ENCODE measurements at regions of chr11 and their contacts with region 1.

Region 1: DNA sequence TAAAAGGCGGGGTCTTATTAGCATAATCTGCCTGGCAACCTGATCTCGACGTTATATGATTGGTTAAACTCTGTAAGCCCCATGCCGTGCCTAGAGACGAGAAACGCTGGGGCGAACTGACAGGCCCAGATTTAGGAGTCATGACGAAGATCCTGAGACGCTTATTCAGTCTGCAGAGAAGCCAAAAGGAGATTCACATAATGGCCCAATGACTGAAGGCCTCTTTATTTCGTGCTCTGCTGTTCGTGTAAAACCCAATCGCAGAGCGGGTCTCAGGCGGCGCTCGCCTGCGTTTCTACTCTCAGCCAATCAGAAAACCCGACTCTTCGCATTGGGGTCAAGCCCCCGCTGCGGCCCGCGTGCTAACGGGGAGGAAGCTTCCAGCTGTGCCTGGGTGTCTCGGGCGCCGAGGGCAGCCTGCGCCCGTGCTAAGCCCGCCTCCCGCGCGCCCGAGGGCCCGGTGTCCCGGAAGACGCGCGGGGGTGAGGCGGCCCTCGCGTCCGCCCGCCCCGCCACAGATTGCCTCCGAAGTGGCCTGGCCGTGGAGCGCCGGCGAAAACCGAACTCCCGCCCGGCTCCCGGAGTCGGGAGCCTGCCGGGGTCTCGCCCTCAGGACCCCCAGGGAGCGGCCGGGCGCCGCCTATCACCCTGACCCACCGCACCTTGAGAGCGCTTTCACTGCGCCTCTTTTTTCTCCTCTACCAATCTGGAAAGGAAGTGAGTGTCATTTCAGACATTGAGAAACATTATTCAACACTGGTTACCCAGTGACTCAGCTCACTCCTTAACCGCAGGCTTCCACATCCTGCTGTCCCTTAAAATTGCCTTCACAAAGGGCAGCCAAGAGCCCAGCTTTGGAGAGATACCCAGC is 446 bp upstream of the PRDM10 start:
- DNase-seq: peak; percentile 89 to 97
- H3K4me3 ChIP-seq: peak overlapping the region; percentile 75
- H3K27ac ChIP-seq: peak overlapping the region; percentile 99
- H3K4me1 ChIP-seq: peaks cover 30% of the 10 kb centered on the region
- H3K27me3 ChIP-seq: no peaks in the 10 kb centered on the region
- CTCF ChIP-seq: no peak

Region 2: DNA sequence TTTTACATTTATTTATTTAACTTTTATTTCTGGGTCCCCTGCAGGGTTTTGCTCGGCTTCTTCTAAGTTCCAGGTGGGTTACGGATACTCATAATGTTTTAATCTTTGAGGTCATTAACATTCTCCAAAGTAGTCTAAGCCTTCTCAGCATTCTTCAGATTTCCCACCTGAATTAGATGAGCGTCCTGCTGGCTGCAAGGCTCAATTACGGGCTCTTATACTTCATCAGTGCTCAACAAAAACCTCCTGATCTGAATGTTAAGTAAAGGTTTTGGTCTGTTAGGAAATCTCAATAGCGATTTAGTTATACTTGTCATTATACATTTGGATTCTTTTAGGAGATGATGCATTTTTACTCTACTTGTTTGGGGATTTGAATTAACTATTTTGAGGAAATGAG is 80.4 kb before region 1 on chr11:
- CTCF ChIA-PET with region 1: no interaction called
- POLR2A ChIA-PET with region 1: interaction called, 5 read pairs
- intact Hi-C with region 1: loop called (anchors 2 kb)
- DNase-seq: no peak
- H3K4me3 ChIP-seq: no peak overlapping the region
- H3K27ac ChIP-seq: no peak overlapping the region
- H3K4me1 ChIP-seq: no peaks in the 10 kb centered on the region
- H3K27me3 ChIP-seq: no peaks in the 10 kb centered on the region
- CTCF ChIP-seq: no peak

Region 3: GRCh38 chr11:130022798-130023583 is 19.9 kb after region 1 on chr11:
- CTCF ChIA-PET with region 1: no interaction called
- POLR2A ChIA-PET with region 1: interaction called, 50 read pairs
- intact Hi-C with region 1: no loop called
- DNase-seq: peak; percentile 71 to 86
- H3K4me3 ChIP-seq: peak overlapping the region; percentile 25; the same call in 1 of the 2 replicates
- H3K27ac ChIP-seq: peak overlapping the region; percentile 76
- H3K4me1 ChIP-seq: peaks cover 33% of the 10 kb centered on the region
- H3K27me3 ChIP-seq: no peaks in the 10 kb centered on the region
- CTCF ChIP-seq: no peak

Region 4: DNA sequence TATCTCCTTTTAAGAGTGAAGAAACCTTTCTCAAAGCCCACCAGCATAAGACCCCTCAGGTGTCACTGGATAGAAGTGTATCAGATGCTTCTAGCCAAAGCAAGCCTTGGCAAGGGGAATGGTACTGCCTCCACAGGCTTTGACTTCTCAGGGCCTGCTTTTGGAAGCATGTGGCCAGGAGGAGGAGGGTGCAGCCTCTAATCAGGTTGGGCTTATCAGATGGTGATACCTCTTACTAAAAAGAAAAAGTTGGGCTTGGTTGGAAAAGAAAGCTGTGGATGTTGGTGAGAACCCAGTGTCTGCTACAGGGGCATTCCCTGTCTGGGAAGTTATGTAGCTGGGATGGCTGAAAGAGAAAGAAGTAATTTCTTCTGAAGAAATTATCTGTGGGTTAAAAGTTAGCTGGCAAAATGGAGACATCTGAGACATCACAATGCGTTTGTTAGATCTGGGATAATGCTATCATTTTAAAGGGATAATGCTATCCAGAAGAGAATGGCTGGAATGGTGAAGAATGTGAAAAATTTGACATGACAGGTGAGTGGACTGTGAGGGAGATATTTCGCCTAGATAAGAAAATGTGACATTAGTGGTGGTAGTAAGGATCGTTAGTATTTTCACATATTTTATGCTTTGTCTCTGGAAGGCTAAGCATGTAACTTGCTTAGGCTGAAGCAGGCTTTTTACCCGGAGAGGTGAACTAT is 73.8 kb after region 1 on chr11:
- CTCF ChIA-PET with region 1: interaction called, 4 read pairs
- POLR2A ChIA-PET with region 1: interaction called, 18 read pairs
- intact Hi-C with region 1: no loop called
- DNase-seq: no peak
- H3K4me3 ChIP-seq: no peak overlapping the region
- H3K27ac ChIP-seq: 0 out of 2 replicates have a peak overlapping the region, but pooled peaks have one; percentile 2
- H3K4me1 ChIP-seq: peaks cover 29% of the 10 kb centered on the region
- H3K27me3 ChIP-seq: no peaks in the 10 kb centered on the region
- CTCF ChIP-seq: no peak

Measured in PC-9 (cell line).